Activated CD8-positive, alpha-beta T cell treated with anti-CD3 and anti-CD28 coated beads for 36 hours (primary cell): ENCODE measurements at regions of chr10 and their contacts with region 1.

Region 1: GRCh38 chr10:79195091-79195923 is 126.5 kb downstream of the ZMIZ1 start:
- DNase-seq: peak; percentile 89
- ATAC-seq: peak; percentile 92
- H3K4me3 Mint-ChIP-seq: no peak overlapping the region
- H3K27ac Mint-ChIP-seq: no peak overlapping the region
- H3K4me1 Mint-ChIP-seq: peaks cover 4% of the 10 kb centered on the region
- H3K27me3 Mint-ChIP-seq: no peaks in the 10 kb centered on the region
- CTCF ChIP-seq: peak; percentile 95

Region 2: GRCh38 chr10:78664929-78665553 is 530.3 kb before region 1 on chr10:
- CTCF ChIA-PET with region 1: interaction called, 26 read pairs
- POLR2A ChIA-PET with region 1: no interaction called
- intact Hi-C with region 1: loop called (anchors 10 kb)
- DNase-seq: peak; percentile 60
- ATAC-seq: peak; percentile 67
- H3K4me3 Mint-ChIP-seq: no peak overlapping the region
- H3K27ac Mint-ChIP-seq: no peak overlapping the region
- H3K4me1 Mint-ChIP-seq: no peaks in the 10 kb centered on the region
- H3K27me3 Mint-ChIP-seq: peaks cover 32% of the 10 kb centered on the region
- CTCF ChIP-seq: peak; percentile 71

Region 3: DNA sequence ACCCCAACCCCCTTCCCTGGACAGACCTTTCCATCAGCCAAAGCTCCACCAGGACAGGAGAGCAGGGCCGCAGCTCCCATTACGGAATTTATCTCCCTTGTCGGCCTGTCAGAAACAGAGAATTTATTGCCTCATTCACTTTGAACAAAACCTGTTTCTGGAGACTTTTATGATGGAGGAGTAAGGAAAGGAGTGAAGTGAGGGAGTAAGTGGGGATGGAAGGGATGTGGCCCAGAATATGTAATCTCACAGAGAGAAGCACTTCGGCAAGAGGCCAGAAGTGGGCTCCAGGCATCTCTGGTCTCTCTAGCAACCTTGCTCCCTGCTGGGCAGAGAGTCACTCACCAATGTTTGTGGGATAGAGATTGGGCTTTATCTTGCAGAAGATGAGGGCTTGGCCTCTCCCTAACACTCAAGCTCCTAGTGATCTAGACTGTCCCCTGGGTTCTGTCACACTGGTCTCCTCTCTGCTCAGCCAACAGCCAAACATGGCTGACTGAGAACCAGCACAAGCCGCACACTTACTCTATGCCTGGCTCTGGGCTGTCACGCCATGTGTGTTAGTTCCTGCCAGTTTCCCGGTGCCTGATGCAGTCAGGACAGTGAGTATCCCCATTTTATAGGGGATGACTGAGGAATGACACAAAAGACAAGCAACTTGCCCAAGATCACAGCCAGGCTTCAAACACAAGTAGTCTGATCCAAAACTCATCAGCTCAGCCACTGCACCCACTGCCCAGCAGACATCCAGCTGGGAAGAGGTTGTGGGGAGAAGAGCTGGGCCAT is 275.9 kb before region 1 on chr10:
- CTCF ChIA-PET with region 1: interaction called, 13 read pairs
- POLR2A ChIA-PET with region 1: no interaction called
- intact Hi-C with region 1: no loop called
- DNase-seq: no peak
- ATAC-seq: no peak
- H3K4me3 Mint-ChIP-seq: no peak overlapping the region
- H3K27ac Mint-ChIP-seq: no peak overlapping the region
- H3K4me1 Mint-ChIP-seq: no peaks in the 10 kb centered on the region
- H3K27me3 Mint-ChIP-seq: no peaks in the 10 kb centered on the region
- CTCF ChIP-seq: no peak

Region 4: GRCh38 chr10:78966844-78967488 is 228.3 kb before region 1 on chr10:
- CTCF ChIA-PET with region 1: interaction called, 10 read pairs
- POLR2A ChIA-PET with region 1: no interaction called
- intact Hi-C with region 1: no loop called
- DNase-seq: no peak
- ATAC-seq: no peak
- H3K4me3 Mint-ChIP-seq: no peak overlapping the region
- H3K27ac Mint-ChIP-seq: no peak overlapping the region
- H3K4me1 Mint-ChIP-seq: no peaks in the 10 kb centered on the region
- H3K27me3 Mint-ChIP-seq: no peaks in the 10 kb centered on the region
- CTCF ChIP-seq: no peak

Region 5: DNA sequence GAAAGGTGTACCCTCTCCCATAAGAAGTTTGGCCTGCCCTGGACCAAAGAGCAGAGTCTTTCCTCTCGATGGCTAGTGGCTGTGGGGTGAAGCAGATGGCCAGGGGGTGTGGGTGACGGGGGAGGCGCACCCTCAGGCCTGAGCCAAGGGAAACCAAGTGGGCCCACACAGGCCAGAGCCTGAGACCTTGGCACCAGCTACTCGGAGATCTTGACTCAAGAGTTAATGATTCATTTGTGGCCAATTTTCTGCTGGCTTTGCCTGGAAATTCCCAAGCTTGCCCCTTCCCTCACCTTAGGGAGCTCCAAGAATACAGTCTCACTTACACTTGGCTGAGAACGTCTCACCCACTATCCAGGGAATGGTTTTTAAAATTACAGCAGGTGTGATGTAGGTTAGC is 83.9 kb before region 1 on chr10:
- CTCF ChIA-PET with region 1: interaction called, 10 read pairs
- POLR2A ChIA-PET with region 1: no interaction called
- intact Hi-C with region 1: no loop called
- DNase-seq: no peak
- ATAC-seq: no peak
- H3K4me3 Mint-ChIP-seq: no peak overlapping the region
- H3K27ac Mint-ChIP-seq: no peak overlapping the region
- H3K4me1 Mint-ChIP-seq: peaks cover 29% of the 10 kb centered on the region
- H3K27me3 Mint-ChIP-seq: no peaks in the 10 kb centered on the region
- CTCF ChIP-seq: no peak

Region 6: DNA sequence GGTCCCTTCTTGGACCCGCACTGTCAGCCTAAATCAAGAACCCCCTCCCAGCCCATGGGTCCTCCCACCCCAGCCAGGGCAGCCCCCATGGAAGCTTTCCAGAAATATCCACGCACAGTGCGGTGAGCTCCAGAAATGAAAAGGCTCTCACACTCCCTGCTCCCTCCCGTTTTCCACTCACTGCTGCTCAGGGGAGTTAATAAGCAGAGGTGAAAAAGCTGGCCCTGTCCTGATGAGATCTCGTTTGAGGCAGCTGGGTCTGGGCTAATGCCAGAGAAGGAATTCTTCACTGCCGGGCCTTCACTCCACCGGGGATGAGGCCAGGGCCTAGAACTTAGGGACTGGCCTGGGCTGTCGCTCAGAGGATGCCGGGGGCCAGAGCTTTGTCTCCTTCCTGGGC is 24.3 kb before region 1 on chr10:
- CTCF ChIA-PET with region 1: interaction called, 10 read pairs
- POLR2A ChIA-PET with region 1: interaction called, 3 read pairs
- intact Hi-C with region 1: no loop called
- DNase-seq: no peak
- ATAC-seq: no peak
- H3K4me3 Mint-ChIP-seq: no peak overlapping the region
- H3K27ac Mint-ChIP-seq: no peak overlapping the region
- H3K4me1 Mint-ChIP-seq: no peaks in the 10 kb centered on the region
- H3K27me3 Mint-ChIP-seq: no peaks in the 10 kb centered on the region
- CTCF ChIP-seq: no peak